Esophagus squamous epithelium (tissue), 5 donors: ENCODE measurements at regions of chr1 and their contacts with region 1.

Region 1: DNA sequence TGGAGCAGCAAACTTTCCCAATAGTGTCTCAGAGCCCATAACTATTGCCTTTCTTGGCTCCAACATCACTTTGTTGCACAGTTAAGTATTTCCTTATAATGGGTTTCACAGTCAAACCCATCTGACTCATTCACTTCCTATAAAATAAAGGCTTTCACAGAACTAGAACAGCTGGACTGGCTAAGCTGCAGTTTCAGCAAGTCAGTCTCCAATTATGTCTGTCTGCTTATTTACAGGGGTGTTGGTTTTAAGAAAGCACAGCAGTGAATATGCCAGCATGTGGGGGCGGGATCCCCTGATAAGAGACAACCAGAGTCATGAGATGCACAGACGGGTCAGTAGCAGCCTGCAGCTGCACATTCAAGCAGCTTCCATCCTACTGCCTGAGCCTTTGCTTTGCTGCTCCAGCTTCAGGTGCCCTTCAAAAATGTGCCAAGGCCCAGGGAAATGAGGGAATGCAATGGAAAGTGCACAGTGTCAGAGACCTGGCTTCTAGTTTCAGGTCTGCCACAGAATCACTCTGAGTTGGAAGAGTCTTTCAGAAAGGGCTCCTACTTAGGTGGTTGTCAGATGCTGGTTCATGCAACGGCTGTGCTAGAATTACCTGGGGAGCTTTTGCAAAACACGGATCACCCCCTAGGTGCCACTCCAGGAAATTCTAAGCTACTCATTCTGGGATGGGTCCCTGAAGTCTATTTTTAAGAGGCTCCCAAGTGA is 24.8 kb downstream of the RNF19B start:
- DNase-seq: no peak
- H3K4me3 ChIP-seq: no peak overlapping the region
- H3K27ac ChIP-seq: peak overlapping the region; percentile 75 to 83 (median 76)
- H3K4me1 ChIP-seq: peaks cover 32 to 66% (median 39%) of the 10 kb centered on the region in 3 donors
- H3K27me3 ChIP-seq: no peaks in the 10 kb centered on the region
- CTCF ChIP-seq: no peak
- POLR2A ChIP-seq: no peak

Region 2: DNA sequence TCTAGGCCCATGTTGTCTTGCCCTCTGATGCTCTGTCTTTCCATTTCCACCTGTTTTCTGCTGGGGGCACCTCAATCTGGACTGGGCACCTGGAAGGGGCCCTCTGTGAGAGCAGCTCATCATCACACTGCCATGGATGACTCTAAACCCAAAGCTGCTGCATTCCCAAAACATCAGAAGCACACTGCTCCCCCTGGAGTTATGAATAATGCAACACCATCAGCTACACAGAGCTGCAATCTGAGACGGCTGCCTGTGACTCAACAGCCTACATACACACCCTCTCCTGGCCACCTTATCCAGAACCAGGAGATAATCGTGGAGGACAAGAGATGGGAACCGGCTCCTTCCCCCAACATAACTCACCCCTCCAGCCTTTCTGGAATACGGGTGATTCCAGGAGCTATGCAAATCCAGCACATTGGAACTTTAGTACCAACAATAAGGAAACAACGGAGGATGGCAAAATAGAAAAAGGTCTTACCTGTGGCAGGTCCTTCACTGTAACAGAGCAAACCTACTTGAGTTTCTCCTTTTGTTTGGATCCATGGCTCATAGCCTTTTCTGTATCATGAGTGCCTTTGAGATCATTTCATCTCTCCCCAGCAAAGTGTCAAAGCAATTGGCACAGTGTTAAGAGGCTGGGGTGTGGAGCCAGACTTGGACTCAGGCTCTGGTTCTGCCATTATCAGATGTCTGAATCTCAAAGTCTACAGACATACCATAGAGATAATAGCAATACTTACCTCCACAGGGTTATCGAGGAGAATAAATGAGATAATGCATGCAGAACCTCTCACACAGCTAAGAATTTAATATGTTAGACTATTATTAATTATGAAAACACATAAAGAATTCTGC is 67.6 kb after region 1 on chr1:
- intact Hi-C with region 1: loop called (anchors 10 kb)
- DNase-seq: no peak
- H3K4me3 ChIP-seq: no peak overlapping the region
- H3K27ac ChIP-seq: peak overlapping the region; percentile 49 to 68 (median 55)
- H3K4me1 ChIP-seq: peaks cover 39 to 83% (median 48%) of the 10 kb centered on the region in 3 donors
- H3K27me3 ChIP-seq: no peaks in the 10 kb centered on the region
- CTCF ChIP-seq: peak in 5 of 6 experiments; percentile 46 to 74 (median 59)
- POLR2A ChIP-seq: no peak

Region 3: GRCh38 chr1:33055210-33056008 is 115.6 kb after region 1 on chr1:
- intact Hi-C with region 1: loop called (anchors 10 kb)
- DNase-seq: no peak
- H3K4me3 ChIP-seq: no peak overlapping the region
- H3K27ac ChIP-seq: no peak overlapping the region
- H3K4me1 ChIP-seq: peaks cover 0 to 18% (median 5%) of the 10 kb centered on the region in 3 donors
- H3K27me3 ChIP-seq: no peaks in the 10 kb centered on the region
- CTCF ChIP-seq: peak; percentile 41 to 69 (median 58)
- POLR2A ChIP-seq: no peak